Activated CD4-positive, alpha-beta memory T cell treated with anti-CD3 and anti-CD28 coated beads for 36 hours (primary cell): ENCODE measurements at regions of chr15 and their contacts with region 1.

Region 1: GRCh38 chr15:45402162-45402954 is 24.0 kb upstream of the GATM start:
- DNase-seq: peak; percentile 98
- H3K4me3 Mint-ChIP-seq: peak overlapping the region; percentile 98
- H3K27ac Mint-ChIP-seq: peak overlapping the region; percentile 90
- H3K4me1 Mint-ChIP-seq: peaks cover 31% of the 10 kb centered on the region
- H3K27me3 Mint-ChIP-seq: no peaks in the 10 kb centered on the region

Region 2: DNA sequence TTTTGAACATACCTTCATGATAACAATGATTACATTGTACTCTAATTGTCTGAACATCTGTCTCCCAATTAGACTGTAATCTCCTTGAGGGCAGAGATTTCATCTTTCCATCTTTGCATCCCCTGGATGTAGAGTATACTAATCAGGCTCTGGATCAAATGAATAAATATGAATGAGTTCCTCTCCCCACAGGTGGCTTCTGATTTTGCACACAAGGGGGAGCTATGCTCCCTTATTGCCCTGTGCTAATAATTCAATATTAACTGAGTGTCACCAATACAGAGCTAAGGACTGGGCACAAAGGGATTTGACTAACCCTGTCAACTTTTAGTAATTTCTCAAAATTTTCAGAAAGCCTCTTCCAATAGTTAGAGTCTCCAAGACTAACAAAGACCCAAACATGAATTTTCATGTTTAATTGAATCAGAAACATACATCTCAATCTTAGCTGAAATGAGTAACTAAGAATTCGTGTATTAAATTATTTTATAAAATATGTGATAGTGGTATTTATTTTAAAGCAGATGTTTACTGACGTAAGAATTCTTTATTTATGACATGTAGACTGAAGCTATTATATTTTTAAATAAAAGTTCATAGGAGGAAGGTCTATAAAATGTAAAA is 275.7 kb before region 1 on chr15:
- CTCF ChIA-PET with region 1: interaction called, 8 read pairs
- POLR2A ChIA-PET with region 1: no interaction called
- intact Hi-C with region 1: loop called (anchors 5 kb)
- DNase-seq: no peak
- H3K4me3 Mint-ChIP-seq: no peak overlapping the region
- H3K27ac Mint-ChIP-seq: no peak overlapping the region
- H3K4me1 Mint-ChIP-seq: no peaks in the 10 kb centered on the region
- H3K27me3 Mint-ChIP-seq: peaks cover 44% of the 10 kb centered on the region

Region 3: GRCh38 chr15:45198337-45199135 is 203.8 kb before region 1 on chr15:
- CTCF ChIA-PET with region 1: interaction called, 71 read pairs
- POLR2A ChIA-PET with region 1: interaction called, 18 read pairs
- intact Hi-C with region 1: loop called (anchors 1 kb)
- DNase-seq: peak; percentile 98
- H3K4me3 Mint-ChIP-seq: no peak overlapping the region
- H3K27ac Mint-ChIP-seq: no peak overlapping the region
- H3K4me1 Mint-ChIP-seq: peaks cover 13% of the 10 kb centered on the region
- H3K27me3 Mint-ChIP-seq: peaks cover 3% of the 10 kb centered on the region

Region 4: DNA sequence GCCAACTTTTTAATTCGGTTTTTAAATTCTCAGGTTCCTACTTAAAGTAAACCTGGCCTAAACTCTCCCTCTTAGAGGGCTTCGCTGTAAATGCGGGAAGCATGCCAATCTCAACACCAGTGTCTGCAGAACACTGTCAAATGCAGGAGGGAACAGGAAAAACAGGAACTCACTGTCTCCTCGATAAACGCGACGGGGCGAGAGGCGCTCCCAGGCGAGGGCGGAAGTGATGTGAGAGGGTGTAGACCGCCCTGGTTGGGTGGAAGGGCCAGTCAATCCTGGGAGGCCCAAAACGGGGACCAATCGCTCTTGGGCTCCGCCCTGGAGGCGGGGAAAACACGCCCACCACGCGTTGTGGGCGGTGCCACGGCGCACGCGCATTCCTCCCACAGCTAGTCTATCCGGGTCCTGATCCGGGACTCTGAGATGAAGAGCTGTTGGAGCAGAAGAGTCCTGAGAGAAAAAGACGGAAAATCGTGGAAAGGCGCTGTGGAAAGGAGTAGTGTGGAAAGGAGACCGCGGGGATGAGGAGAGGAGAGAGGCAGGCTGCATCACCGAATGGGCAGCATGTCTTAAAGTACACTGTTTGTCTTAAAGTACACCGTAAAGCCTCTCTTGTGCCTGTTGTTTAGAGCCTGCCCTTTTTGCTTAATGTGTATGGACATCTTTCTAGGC is 123.2 kb before region 1 on chr15:
- CTCF ChIA-PET with region 1: interaction called, 3 read pairs
- POLR2A ChIA-PET with region 1: no interaction called
- intact Hi-C with region 1: loop called (anchors 1 kb)
- DNase-seq: peak; percentile 98
- H3K4me3 Mint-ChIP-seq: peak overlapping the region; percentile 85
- H3K27ac Mint-ChIP-seq: peak overlapping the region; percentile 57
- H3K4me1 Mint-ChIP-seq: peaks cover 10% of the 10 kb centered on the region
- H3K27me3 Mint-ChIP-seq: no peaks in the 10 kb centered on the region

Region 5: GRCh38 chr15:45522328-45523160 is 120.2 kb after region 1 on chr15 and contains the start of gene SLC30A4:
- CTCF ChIA-PET with region 1: no interaction called
- POLR2A ChIA-PET with region 1: no interaction called
- intact Hi-C with region 1: loop called (anchors 2 kb)
- DNase-seq: peak; percentile 66
- H3K4me3 Mint-ChIP-seq: peak within 1 kb of the TSS; percentile 82
- H3K27ac Mint-ChIP-seq: peak within 1 kb of the TSS; percentile 14
- H3K4me1 Mint-ChIP-seq: peaks cover 21% of the 10 kb centered on the region
- H3K27me3 Mint-ChIP-seq: no peaks in the 10 kb centered on the region
- total RNA-seq, gene SLC30A4: 1.5 to 2.0 TPM